ENCODE measurements at regions of chr13 and their contacts with region 1.

Region 1: GRCh38 chr13:98484289-98485219 is 92.4 kb downstream of the STK24 start:
- DNase-seq: peak in 1 of 2 experiments; percentile 73
- H3K4me3 ChIP-seq: peak overlapping the region in 3 of 4 experiments; percentile 11 to 43 (median 16); a peak in 4 of 8 replicates
- H3K27ac ChIP-seq: peak overlapping the region; percentile 65; the same call in 1 of the 2 replicates
- H3K4me1 ChIP-seq: peaks cover 13 to 48% (median 39%) of the 10 kb centered on the region in 4 experiments
- H3K27me3 ChIP-seq: no peaks in the 10 kb centered on the region
- CTCF ChIP-seq: no peak
- EP300 ChIP-seq: peak; percentile 2 to 61; a peak in 2 of 3 replicates
- POLR2A ChIP-seq: no peak; a peak in 1 of 3 replicates
- RAD21 ChIP-seq: no peak

Region 2: DNA sequence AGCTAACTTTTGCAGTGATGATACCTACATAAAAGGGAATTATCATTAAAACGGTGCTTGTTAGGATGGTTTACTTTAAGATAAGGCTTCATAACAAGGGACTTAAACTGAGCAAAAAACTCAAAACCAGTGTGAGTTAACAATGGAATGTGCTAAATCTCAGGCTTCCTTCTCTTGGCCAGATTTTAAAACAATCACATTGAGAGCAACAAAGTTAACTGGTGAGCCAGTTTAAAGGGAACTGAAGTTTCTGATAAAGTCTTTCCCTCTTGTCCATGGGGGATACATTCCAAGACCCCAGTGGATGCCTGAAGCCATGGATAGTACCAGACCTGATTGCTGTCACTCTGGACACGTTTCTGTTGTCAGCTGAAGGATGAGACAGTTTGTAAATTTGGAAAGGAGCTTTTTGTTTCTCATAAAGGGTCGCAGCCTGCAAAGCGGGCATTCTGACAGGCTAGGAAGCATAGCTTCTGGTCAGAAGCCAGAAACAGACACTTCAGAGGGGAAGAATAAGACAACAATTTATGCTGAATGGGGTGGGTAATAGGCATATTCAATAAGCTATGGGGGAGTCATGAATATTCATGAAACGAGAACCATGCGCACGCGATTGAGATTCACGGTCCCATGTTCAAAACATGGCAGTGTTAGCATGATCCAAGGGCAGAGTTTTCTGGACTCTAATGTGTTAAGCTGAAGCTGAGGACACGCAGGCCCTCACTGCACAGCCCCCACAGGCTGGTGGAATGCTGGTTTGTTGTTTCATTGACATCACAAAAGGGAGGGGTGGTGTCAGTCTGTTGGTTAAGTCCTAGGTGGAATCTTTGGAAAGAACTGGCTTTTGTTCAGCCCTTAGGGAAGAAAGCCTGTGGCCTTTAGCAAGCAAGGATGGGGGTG is 156.9 kb before region 1 on chr13:
- CTCF ChIA-PET with region 1: no interaction called
- POLR2A ChIA-PET with region 1: no interaction called
- DNase-seq: peak in 1 of 2 experiments; percentile 43
- H3K4me3 ChIP-seq: peak overlapping the region in 3 of 4 experiments; percentile 17 to 45 (median 19); a peak in 4 of 8 replicates
- H3K27ac ChIP-seq: peak overlapping the region; percentile 68
- H3K4me1 ChIP-seq: peaks cover 6 to 49% (median 30%) of the 10 kb centered on the region in 4 experiments; a peak in 6 of 7 replicates
- H3K27me3 ChIP-seq: no peaks in the 10 kb centered on the region
- CTCF ChIP-seq: no peak
- EP300 ChIP-seq: peak in 1 of 2 experiments; percentile 41; a peak in 1 of 3 replicates
- POLR2A ChIP-seq: no peak
- RAD21 ChIP-seq: 0 out of 4 replicates have a peak, but pooled peaks of 1 of the 2 experiments have one; percentile 11

Region 3: DNA sequence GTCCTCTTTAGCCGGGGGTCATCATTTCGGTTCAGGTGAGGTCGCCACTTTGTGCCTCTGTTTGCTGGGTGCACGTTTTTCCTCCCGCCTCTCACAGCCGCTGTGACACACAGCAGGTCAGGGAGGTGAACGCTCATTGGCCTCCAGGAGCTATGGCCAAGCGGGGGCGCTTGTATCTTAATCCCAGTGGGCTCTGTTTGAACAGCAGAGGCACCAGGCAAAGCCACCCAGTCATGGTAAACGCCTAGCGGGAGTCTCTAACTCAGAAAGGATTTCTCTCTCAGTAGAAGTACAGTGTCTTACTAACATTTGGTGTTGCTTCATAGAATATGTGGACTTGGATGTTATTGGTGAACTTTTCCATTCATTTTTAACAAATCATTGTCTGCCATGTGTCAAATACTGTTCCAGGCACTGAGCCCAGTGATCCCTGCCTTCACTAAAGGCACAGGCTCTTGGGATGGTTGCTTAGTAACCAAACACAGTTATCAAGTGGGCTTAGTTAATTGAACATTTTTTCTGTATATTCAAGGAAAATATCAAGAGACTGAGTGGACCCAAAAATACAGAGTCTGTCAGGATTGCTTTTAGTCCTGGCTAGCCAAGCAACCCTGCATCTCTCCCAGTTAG is 94.4 kb before region 1 on chr13:
- CTCF ChIA-PET with region 1: no interaction called
- POLR2A ChIA-PET with region 1: no interaction called
- DNase-seq: no peak
- H3K4me3 ChIP-seq: no peak overlapping the region
- H3K27ac ChIP-seq: no peak overlapping the region
- H3K4me1 ChIP-seq: no peaks in the 10 kb centered on the region
- H3K27me3 ChIP-seq: no peaks in the 10 kb centered on the region
- CTCF ChIP-seq: no peak; a peak in 1 of 4 replicates
- EP300 ChIP-seq: no peak
- POLR2A ChIP-seq: no peak
- RAD21 ChIP-seq: peak in 1 of 2 experiments; percentile 3; a peak in 1 of 4 replicates

Region 4: DNA sequence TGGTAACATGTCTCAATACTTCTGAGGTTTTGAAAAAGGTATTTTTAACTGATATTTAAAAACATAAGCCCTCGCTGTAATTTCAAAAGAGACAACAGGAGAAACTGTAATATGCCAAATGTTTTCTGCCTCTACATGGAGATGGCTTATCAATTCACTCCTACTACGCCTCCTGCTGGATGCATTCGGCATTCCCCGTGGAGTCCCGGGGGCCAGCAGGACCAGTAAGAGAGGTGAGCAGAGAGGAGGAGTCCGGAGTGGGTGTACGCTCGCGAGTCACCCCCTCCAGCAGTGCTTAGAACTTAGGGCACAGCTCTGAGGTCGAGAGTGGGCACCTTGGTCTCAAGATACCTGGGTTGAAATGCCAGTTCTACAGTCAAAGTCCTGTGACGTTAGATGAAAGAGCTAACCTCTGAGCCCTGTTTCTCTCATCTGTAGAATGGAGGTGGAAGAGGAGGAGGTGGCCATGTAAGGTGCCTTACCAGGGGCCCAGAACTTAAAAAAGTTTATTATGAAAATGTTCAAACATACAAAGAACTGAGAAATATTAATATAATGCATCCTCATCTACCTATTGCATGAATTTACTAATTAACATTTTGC is 17.8 kb before region 1 on chr13:
- CTCF ChIA-PET with region 1: interaction called, 32 read pairs
- POLR2A ChIA-PET with region 1: no interaction called
- DNase-seq: peak in 1 of 2 experiments; percentile 94
- H3K4me3 ChIP-seq: no peak overlapping the region
- H3K27ac ChIP-seq: no peak overlapping the region
- H3K4me1 ChIP-seq: peaks cover 0 to 3% (median 1%) of the 10 kb centered on the region in 4 experiments; a peak in 2 of 7 replicates
- H3K27me3 ChIP-seq: no peaks in the 10 kb centered on the region
- CTCF ChIP-seq: peak; percentile 75 to 89 (median 87)
- EP300 ChIP-seq: no peak
- POLR2A ChIP-seq: no peak
- RAD21 ChIP-seq: peak; percentile 65 to 73

Region 5: DNA sequence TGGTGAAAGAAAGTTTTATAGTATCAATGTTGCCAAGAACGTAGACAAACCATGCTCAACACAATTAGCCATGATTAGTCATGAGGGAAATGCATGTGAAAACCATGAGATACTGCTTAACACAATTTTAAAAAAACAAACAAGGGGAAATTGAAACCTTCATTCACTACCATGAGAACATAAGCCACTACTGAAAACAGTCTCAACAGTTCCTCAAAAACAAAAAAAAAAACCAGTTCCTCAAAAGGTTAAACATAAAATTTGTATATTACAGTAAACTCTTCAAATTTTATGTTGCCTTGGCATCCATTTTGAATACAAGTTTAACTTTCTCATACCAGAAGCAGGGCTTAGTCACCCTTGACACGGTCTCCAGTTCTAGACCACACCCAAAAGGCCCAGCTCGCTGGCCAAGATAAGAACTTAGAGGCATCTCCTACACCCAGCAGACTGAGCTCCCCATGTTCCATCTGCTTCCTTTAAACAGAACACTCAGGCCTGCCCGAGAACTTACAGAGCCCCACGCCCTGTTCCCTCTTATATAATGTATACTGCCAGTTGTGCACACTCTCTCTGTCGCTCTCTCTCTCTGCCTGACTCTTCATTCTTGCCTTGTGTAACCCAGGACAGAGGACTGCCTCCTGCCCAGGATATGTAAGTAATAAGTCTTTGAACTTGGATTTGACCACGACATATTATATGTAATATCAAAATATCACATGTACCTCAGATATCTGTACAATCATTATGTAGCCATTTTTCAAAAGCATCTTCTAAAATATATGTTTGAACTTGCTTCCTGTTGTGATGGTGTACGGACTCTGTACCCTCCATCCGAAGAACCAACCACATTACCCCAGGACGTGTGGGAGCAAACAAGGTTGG is 25.0 kb after region 1 on chr13:
- CTCF ChIA-PET with region 1: interaction called, 18 read pairs
- POLR2A ChIA-PET with region 1: interaction called, 4 read pairs
- DNase-seq: no peak
- H3K4me3 ChIP-seq: no peak overlapping the region
- H3K27ac ChIP-seq: no peak overlapping the region
- H3K4me1 ChIP-seq: peaks cover 6 to 22% (median 17%) of the 10 kb centered on the region in 4 experiments
- H3K27me3 ChIP-seq: no peaks in the 10 kb centered on the region
- CTCF ChIP-seq: no peak
- EP300 ChIP-seq: no peak
- POLR2A ChIP-seq: no peak
- RAD21 ChIP-seq: no peak

Region 6: DNA sequence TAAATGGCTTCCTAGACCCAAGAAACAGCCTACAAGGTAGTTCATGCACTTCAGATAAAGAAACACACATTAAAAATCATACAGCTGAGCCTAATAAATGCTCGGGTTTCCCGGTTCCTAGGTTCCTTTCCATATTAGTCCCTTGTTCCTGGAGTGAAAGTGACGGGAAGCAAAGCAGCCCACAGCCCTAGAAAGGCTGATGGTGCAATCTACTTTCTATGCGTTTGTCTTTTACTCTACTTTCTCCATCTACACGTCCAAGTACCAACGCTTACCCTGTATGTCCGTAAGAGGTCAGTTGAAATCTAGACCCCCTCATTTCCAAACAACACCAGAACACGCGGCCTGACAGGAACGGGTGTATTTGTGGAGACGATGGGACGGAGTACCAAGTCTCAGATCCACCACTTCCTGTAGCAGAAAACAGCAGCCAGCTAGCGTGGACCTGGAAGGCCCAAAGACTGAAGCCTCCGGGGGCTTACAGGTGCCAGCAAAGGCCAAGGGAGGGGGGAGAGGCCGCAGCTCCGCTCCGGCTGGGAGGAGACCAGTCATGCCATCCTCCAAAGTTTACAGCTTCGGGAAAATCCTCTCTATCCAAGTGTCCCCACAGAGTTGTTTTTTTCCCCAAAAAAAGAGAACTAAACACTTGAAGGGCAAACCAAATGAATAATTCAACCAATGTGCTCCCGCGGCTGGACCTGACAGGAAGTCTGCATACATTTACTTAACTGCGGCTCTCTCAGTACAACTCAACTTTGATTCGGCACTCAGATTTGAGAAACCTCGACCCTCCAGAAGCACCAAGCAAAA is 58.2 kb after region 1 on chr13:
- CTCF ChIA-PET with region 1: interaction called, 13 read pairs
- POLR2A ChIA-PET with region 1: no interaction called
- DNase-seq: no peak
- H3K4me3 ChIP-seq: no peak overlapping the region
- H3K27ac ChIP-seq: no peak overlapping the region
- H3K4me1 ChIP-seq: peaks cover 7 to 18% (median 12%) of the 10 kb centered on the region in 4 experiments
- H3K27me3 ChIP-seq: no peaks in the 10 kb centered on the region
- CTCF ChIP-seq: no peak
- EP300 ChIP-seq: no peak
- POLR2A ChIP-seq: no peak
- RAD21 ChIP-seq: no peak

Region 7: GRCh38 chr13:98598043-98598442 is 113.5 kb after region 1 on chr13:
- CTCF ChIA-PET with region 1: interaction called, 12 read pairs
- POLR2A ChIA-PET with region 1: no interaction called
- DNase-seq: no peak
- H3K4me3 ChIP-seq: no peak overlapping the region
- H3K27ac ChIP-seq: no peak overlapping the region
- H3K4me1 ChIP-seq: no peaks in the 10 kb centered on the region
- H3K27me3 ChIP-seq: no peaks in the 10 kb centered on the region; a peak in 1 of 7 replicates
- CTCF ChIP-seq: peak in 2 of 3 experiments; percentile 41 to 57; a peak in 2 of 4 replicates
- EP300 ChIP-seq: no peak
- POLR2A ChIP-seq: no peak
- RAD21 ChIP-seq: peak; percentile 42 to 66

Measured in H1 (cell line).